Activated T-helper 1 cell treated with anti-CD3 and anti-CD28 coated beads, Interleukin-12 subunit alpha, Interleukin-12 subunit beta, Interleukin-2, Interleukin-4 antibody, amounts not matched to agents 30 ng/mL and 10 ng/mL and 1 ng/mL, durations not matched to agents 14 hours and 24 hours and 36 hours (primary cell): ENCODE measurements at regions of chr14 and their contacts with region 1.

Region 1: DNA sequence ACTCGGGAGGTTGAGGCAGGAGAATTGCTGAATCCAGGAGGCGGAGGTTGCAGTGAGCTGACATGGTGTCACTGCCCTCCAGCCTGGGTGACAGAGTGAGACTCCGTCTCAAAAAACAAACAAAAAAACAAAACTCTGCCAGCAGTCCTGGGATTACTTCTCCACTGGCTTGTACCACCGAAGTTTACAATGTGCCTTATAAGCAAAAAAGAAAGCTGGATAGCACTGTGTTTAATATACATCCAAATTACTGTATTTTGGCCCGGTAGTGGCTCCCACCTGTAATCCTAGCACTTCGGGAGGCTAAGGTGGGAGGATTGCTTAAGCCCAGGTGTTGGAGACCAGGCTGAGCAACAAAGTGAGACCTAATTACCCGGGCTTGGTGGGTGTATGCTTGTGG is 16.7 kb downstream of the HOMEZ start:
- DNase-seq: no peak
- H3K4me3 Mint-ChIP-seq: no peak overlapping the region
- H3K27ac Mint-ChIP-seq: no peak overlapping the region
- H3K4me1 Mint-ChIP-seq: no peaks in the 10 kb centered on the region
- H3K27me3 Mint-ChIP-seq: peaks cover 25% of the 10 kb centered on the region

Region 2: GRCh38 chr14:23294734-23295561 is 25.8 kb after region 1 on chr14:
- intact Hi-C with region 1: loop called (anchors 1 kb)
- DNase-seq: peak; percentile 50
- H3K4me3 Mint-ChIP-seq: no peak overlapping the region
- H3K27ac Mint-ChIP-seq: peak overlapping the region; percentile 67
- H3K4me1 Mint-ChIP-seq: peaks cover 19% of the 10 kb centered on the region
- H3K27me3 Mint-ChIP-seq: peaks cover 2% of the 10 kb centered on the region